SK-N-SH (cell line): ENCODE measurements at regions of chr1 and their contacts with region 1.

Region 1: DNA sequence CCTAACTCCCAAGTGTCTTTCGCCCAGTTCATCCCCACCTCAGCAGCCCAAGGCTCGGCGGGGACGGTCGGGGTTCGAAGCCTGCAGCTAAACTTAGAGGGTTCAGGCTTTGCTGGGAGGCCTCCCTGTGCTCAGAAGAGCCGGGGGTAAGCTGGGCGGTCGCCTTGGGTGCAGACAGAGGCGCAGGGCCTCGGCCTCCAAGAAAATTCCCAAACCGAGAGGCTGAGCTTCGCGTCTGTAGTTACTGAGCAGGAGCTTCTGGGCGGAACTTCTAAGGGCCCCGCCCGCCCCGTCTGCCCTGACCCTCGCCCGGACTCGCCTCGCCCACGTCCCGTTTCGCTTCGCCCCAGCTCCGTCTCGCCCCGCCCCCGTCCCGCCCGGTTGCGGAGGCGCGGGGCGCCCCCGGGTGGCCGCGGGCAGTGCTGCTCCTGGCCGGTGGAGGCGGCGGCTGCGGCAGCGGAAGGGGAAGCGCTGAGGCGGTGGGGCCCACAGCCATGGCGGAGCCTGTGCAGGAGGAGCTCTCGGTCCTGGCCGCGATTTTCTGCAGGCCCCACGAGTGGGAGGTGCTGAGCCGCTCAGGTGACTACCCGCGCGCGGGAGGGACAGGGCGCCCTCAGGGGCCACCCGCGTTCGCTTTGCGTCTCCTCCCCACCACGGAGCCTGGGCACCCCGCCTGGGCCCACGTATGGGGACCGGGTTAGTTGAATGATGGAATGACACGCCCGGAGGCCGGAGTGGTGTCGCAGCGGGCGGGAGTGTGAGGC is at the start of gene RWDD3:
- DNase-seq: peak; percentile 97
- H3K4me3 ChIP-seq: peak within 1 kb of the TSS; percentile 86 to 92
- H3K27ac ChIP-seq: peak within 1 kb of the TSS; percentile 55 to 86; a peak in 3 of 4 replicates
- H3K4me1 ChIP-seq: peaks cover 13 to 17% of the 10 kb centered on the region in 2 experiments; a peak in 3 of 4 replicates
- H3K27me3 ChIP-seq: no peaks in the 10 kb centered on the region
- CTCF ChIP-seq: peak; percentile 77
- EP300 ChIP-seq: no peak
- RAD21 ChIP-seq: peak; percentile 77
- polyA plus RNA-seq, gene RWDD3: 11.9 and 19.5 TPM in 2 replicates

Region 2: GRCh38 chr1:94926915-94927404 is 307.0 kb before region 1 on chr1 and contains the start of gene CNN3:
- CTCF ChIA-PET with region 1: no interaction called
- POLR2A ChIA-PET with region 1: no interaction called
- DNase-seq: peak; percentile 98
- H3K4me3 ChIP-seq: peak within 1 kb of the TSS; percentile 96 to 98
- H3K27ac ChIP-seq: peak within 1 kb of the TSS; percentile 97 to 98
- H3K4me1 ChIP-seq: peaks cover 29 to 42% of the 10 kb centered on the region in 2 experiments
- H3K27me3 ChIP-seq: no peaks in the 10 kb centered on the region
- CTCF ChIP-seq: no peak
- EP300 ChIP-seq: no peak
- RAD21 ChIP-seq: no peak; the same call in 1 of the 2 replicates
- polyA plus RNA-seq, gene CNN3: 204 and 242 TPM in 2 replicates

Region 3: DNA sequence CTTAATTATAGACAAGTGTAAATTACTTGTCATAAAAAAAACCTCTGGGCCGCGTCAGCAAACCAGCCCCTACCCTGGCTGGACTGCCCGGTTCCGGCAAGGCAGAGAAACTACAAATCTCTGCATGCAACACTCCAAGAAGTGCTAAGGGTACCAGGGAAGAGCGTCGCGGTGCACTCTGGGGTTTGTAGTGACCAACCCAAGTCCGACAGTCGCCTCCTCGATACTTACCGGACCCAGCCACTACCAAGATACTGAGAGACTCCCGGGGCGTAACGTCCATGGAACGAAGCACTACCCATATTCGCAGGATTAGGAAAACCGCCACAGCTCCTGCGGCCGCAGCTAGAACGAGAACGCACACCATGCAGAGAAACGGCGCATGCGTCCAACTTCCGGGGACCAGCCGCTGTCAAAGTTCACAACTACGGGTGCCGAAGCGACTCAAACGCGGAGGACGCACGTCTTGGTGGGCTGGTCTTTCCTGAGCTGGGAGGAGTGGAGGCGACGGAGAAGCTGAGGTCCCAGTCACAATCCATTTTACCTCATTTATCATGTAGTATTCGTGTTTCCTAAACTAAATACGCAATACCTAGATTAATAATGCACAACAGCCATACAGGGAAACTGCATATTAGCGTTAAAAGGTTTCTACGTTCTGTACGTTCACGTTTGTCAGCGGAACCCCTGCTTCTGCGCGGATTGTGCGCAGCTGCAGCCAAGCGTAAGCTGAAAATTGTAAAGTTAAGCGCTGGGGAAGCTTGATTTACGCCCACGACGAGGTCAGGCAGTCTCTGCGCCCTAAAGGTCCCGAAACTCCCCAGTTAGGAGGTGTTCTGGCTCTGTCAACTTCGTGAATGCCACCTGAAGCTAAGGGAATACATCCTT is 161.1 kb before region 1 on chr1 and contains the start of gene ALG14:
- CTCF ChIA-PET with region 1: interaction called, 22 read pairs
- POLR2A ChIA-PET with region 1: interaction called, 14 read pairs
- DNase-seq: peak; percentile 86
- H3K4me3 ChIP-seq: peak within 1 kb of the TSS; percentile 76 to 81
- H3K27ac ChIP-seq: peak within 1 kb of the TSS; percentile 83 to 98
- H3K4me1 ChIP-seq: peaks cover 0 to 5% of the 10 kb centered on the region in 2 experiments; a peak in 2 of 4 replicates
- H3K27me3 ChIP-seq: no peaks in the 10 kb centered on the region
- CTCF ChIP-seq: no peak
- EP300 ChIP-seq: 0 out of 4 replicates have a peak, but pooled peaks of 1 of the 2 experiments have one; percentile 10
- RAD21 ChIP-seq: no peak; the same call in 1 of the 2 replicates
- polyA plus RNA-seq, gene ALG14: 2.5 and 2.6 TPM in 2 replicates

Region 4: DNA sequence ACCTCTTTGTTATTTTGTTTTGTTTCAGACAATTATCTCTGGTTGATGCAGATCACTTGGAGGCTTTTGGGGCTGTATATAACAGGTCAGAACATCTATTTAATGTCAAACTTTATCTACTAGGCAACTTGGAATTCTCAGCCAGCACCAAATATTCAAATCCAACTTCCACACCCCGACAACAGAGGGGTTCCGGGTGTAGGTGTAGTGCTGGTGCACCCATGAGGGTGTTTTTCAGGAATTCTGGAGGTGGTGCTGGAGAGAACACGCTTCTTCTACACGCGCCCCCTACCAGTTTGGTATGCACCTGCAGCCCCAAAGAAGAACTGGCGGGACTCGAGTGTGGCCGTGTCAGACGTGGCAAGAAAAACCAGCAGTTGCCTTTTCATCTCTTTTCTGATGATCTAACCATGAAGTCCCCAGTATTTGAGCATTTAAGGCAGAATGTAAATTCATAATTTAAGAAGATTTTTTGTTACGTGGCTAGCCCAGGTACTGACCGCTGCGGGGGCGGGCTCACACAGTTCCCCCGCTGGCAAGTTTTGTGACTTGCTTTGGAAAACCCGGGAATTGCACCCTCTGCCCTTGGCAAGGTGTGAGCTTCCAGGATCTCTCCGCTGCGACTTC is 117.2 kb before region 1 on chr1:
- CTCF ChIA-PET with region 1: interaction called, 30 read pairs
- POLR2A ChIA-PET with region 1: interaction called, 4 read pairs
- DNase-seq: peak; percentile 83
- H3K4me3 ChIP-seq: peak overlapping the region; percentile 69 to 77
- H3K27ac ChIP-seq: no peak overlapping the region
- H3K4me1 ChIP-seq: peaks cover 0 to 7% of the 10 kb centered on the region in 2 experiments; a peak in 2 of 4 replicates
- H3K27me3 ChIP-seq: no peaks in the 10 kb centered on the region; the same call in 1 of the 2 replicates
- CTCF ChIP-seq: peak; percentile 65
- EP300 ChIP-seq: no peak
- RAD21 ChIP-seq: peak; percentile 56

Region 5: GRCh38 chr1:95223110-95223509 is 10.8 kb before region 1 on chr1:
- CTCF ChIA-PET with region 1: interaction called, 26 read pairs
- POLR2A ChIA-PET with region 1: interaction called, 5 read pairs
- DNase-seq: no peak
- H3K4me3 ChIP-seq: no peak overlapping the region
- H3K27ac ChIP-seq: no peak overlapping the region
- H3K4me1 ChIP-seq: no peaks in the 10 kb centered on the region; a peak in 1 of 4 replicates
- H3K27me3 ChIP-seq: no peaks in the 10 kb centered on the region
- CTCF ChIP-seq: no peak
- EP300 ChIP-seq: no peak
- RAD21 ChIP-seq: no peak

Region 6: DNA sequence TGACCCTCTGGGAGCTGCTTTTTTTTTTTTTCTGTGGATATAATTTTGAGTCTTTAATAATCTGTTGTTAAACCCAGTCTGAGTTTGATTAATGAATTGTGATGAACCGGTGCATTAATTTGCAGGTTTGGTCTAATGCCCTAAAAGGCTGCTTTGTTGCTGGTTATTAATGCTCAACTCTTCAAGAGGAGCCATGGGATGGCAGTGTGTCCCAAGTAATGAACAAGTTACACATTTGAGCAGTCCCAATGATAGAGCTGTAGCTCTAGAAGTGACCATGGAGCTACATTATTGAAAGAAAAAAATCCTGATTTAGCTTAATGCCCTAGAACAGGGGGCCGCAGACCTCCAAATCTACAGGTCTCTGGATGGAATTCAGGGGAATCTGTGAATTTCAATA is 53.2 kb after region 1 on chr1:
- CTCF ChIA-PET with region 1: no interaction called
- POLR2A ChIA-PET with region 1: no interaction called
- DNase-seq: peak; percentile 45
- H3K4me3 ChIP-seq: no peak overlapping the region
- H3K27ac ChIP-seq: no peak overlapping the region
- H3K4me1 ChIP-seq: peaks cover 0 to 3% of the 10 kb centered on the region in 2 experiments; a peak in 2 of 4 replicates
- H3K27me3 ChIP-seq: no peaks in the 10 kb centered on the region
- CTCF ChIP-seq: no peak
- EP300 ChIP-seq: no peak
- RAD21 ChIP-seq: peak; percentile 73

Region 7: DNA sequence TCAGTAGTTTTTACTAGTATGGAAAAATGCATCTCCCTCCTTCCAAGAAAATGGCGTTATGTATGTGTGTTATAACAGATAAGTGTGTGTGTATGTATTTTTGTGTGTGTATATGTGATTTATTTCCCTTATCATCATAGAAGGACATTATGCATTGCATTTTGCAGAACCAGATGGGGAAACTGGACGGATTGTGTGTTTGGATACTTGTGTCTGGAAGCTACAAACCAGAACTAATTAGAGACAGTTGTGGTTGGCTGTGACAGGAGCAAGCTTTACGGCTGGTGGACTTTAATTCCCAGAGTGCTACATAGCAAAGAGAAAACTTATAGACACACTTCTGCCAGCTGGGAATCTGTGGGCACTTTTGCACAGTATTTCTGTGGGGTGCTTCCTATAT is 162.6 kb after region 1 on chr1:
- CTCF ChIA-PET with region 1: no interaction called
- POLR2A ChIA-PET with region 1: no interaction called
- DNase-seq: peak; percentile 41
- H3K4me3 ChIP-seq: no peak overlapping the region
- H3K27ac ChIP-seq: peak overlapping the region in 1 of 2 experiments; percentile 99; a peak in 2 of 4 replicates
- H3K4me1 ChIP-seq: peaks cover 0 to 4% of the 10 kb centered on the region in 2 experiments; a peak in 2 of 4 replicates
- H3K27me3 ChIP-seq: no peaks in the 10 kb centered on the region
- CTCF ChIP-seq: no peak
- EP300 ChIP-seq: peak; percentile 31 to 100; a peak in 2 of 4 replicates
- RAD21 ChIP-seq: peak; percentile 54